ENCODE measurements at regions of chr10 and their contacts with region 1.

Region 1: DNA sequence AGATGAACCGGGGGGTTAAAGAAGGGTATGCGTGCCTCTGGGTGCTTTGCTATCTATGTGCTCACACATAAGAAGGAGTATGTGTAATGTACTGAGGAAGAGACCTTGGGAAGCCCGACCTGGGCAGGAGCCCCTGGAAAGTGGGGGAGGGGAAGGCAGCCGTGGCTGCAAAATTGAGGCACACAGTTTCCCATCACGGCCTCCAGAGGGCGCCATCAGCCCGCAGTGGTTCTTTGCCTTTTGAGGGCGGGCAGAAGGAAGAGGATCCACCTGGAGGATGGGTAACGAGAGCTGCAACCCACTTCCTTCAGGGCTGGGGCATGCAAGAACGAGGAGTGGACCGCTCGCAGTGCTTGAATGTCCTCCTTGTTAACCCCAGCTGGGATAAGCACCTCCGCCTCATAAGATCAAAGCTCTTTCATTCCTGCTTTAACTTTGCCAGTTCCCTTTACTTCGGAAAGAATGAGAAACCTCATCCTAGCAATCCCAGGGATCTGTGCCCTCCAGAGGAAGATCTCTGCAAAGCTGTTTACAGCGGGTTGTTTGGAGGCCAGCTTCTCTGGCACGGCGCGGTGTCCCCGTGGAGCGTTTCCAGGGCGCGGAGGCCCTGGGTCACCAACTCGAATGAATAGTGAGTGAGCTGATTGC is 77.9 kb downstream of the PCGF5 start:
- DNase-seq: peak; percentile 79
- CTCF ChIP-seq: peak; percentile 84

Region 2: GRCh38 chr10:90751107-90751997 is 547.0 kb before region 1 on chr10:
- in situ Hi-C with region 1: loop called (anchors 25 kb)
- DNase-seq: peak; percentile 47
- CTCF ChIP-seq: peak; percentile 60

Region 3: DNA sequence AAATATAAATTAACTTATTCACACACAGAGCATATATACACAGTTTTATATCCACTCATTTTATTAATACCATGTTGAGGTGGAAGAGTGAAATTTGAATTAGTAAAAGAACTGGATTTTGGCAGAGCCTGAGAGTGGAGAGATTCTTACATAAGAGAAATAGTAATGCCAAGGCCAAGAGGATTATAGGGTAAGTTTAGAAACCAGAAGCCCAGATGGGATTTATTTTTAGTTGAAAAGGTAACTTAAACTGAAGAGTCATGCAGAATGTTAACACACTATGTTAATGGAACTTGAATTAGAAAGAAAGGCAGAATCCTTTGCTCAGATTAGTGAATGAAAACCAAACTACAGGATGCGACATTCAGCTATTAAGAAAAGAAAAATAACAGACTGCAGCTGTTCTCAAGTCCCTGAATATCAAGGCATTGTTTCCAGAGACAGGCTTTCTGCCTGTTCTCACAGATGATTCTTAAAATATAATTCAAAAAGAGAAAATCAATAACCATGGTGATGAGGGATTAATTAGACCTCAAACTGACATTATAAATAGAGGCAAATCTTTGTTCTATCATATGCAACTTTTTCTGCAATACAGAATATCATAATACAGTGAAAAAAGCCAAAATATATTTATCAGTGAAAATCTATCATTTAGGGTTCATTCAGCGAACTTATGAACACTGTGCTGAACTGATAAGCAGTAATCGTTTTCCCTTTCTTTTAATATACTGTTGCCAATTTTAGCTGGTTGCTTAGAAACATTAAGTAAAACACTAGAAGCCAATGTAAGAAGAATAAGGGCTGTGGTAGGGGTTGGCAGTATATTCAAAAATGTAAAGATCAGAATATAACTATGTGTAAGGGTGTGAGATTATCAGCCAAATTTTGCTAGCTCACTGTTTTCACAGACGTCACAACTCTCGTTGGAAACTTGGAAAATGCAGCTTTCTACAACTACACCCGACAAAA is 146.1 kb after region 1 on chr10:
- in situ Hi-C with region 1: no loop called
- DNase-seq: no peak
- CTCF ChIP-seq: no peak

Region 4: GRCh38 chr10:91711885-91712680 is 413.7 kb after region 1 on chr10:
- in situ Hi-C with region 1: no loop called
- DNase-seq: peak; percentile 31
- CTCF ChIP-seq: no peak